CD14-positive monocyte (primary cell): ENCODE measurements at regions of chr6 and their contacts with region 1.

Region 1: GRCh38 chr6:41591859-41592502 is 45.8 kb downstream of the FOXP4 start:
- DNase-seq: peak; percentile 34 to 56 (median 55)
- H3K4me3 ChIP-seq: no peak overlapping the region
- H3K4me3 Mint-ChIP-seq: no peak overlapping the region
- H3K27ac ChIP-seq: no peak overlapping the region
- H3K27ac Mint-ChIP-seq: peak overlapping the region in 1 of 7 donors; percentile 40
- H3K4me1 ChIP-seq: no peaks in the 10 kb centered on the region
- H3K4me1 Mint-ChIP-seq: no peaks in the 10 kb centered on the region
- H3K27me3 ChIP-seq: no peaks in the 10 kb centered on the region
- H3K27me3 Mint-ChIP-seq: peaks cover 0 to 2% (median 0%) of the 10 kb centered on the region in 3 donors
- CTCF ChIP-seq: peak; percentile 89

Region 2: GRCh38 chr6:41367700-41368099 is 224.3 kb before region 1 on chr6:
- intact Hi-C with region 1: loop called (anchors 2 to 5 kb)
- DNase-seq: no peak
- H3K4me3 ChIP-seq: no peak overlapping the region
- H3K4me3 Mint-ChIP-seq: peak overlapping the region in 1 of 2 donors; percentile 15
- H3K27ac ChIP-seq: no peak overlapping the region
- H3K27ac Mint-ChIP-seq: peak overlapping the region in 1 of 7 donors; percentile 46
- H3K4me1 ChIP-seq: peaks cover 13 to 19% of the 10 kb centered on the region in 2 donors
- H3K4me1 Mint-ChIP-seq: peaks cover 20% of the 10 kb centered on the region
- H3K27me3 ChIP-seq: peaks cover 42 to 73% of the 10 kb centered on the region in 2 donors
- H3K27me3 Mint-ChIP-seq: peaks cover 53 to 76% (median 69%) of the 10 kb centered on the region in 3 donors
- CTCF ChIP-seq: no peak

Region 3: GRCh38 chr6:41424370-41425058 is 167.5 kb before region 1 on chr6:
- intact Hi-C with region 1: loop called (anchors 1 kb)
- DNase-seq: peak; percentile 40 to 55 (median 50)
- H3K4me3 ChIP-seq: no peak overlapping the region
- H3K4me3 Mint-ChIP-seq: no peak overlapping the region
- H3K27ac ChIP-seq: no peak overlapping the region
- H3K27ac Mint-ChIP-seq: no peak overlapping the region
- H3K4me1 ChIP-seq: peaks cover 10 to 21% of the 10 kb centered on the region in 2 donors
- H3K4me1 Mint-ChIP-seq: peaks cover 7% of the 10 kb centered on the region
- H3K27me3 ChIP-seq: peaks cover 42 to 48% of the 10 kb centered on the region in 2 donors
- H3K27me3 Mint-ChIP-seq: peaks cover 26 to 31% (median 28%) of the 10 kb centered on the region in 3 donors
- CTCF ChIP-seq: peak; percentile 85

Region 4: DNA sequence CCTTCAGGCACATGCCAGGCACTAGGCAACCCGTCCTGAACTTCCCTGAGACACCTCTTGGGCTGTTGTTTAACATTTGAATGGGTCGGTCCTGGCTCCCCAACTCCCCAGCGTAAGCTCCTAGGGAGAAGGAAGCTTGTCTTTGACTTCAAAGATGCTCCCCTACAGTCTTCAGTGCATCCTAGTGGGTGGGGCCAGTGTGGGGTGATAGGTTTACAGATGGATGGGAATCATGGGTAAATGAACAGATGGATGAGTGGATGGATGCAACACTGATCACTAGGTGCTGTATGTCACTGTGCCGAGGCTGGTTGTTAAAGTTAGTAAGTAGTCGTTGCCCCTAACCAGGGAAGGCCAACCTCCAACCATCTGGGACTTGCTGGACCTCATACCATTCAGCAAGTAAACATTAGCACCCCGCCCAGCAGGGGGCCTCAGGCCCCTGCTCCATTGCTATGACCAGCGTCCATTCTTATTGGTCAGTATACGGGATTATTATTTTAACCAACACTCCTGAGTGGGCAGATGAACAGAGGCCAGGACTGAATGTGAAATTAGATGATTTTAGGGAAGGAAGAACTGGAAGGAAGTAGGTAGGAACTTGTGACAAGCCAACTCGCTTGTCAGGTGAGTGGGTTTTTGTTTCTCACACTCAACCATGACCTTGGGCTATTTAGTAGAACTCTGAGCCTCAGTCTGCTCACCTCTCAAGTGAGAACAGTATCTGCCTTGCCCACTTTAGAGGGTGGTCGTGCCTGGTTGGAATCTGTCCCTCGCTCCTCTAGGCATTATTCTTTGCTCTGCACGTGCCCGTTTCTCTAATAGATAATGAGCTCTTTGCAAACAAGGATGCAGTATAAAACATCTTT is 128.7 kb before region 1 on chr6:
- intact Hi-C with region 1: loop called (anchors 1 to 2 kb)
- DNase-seq: peak; percentile 21 to 51 (median 46)
- H3K4me3 ChIP-seq: no peak overlapping the region
- H3K4me3 Mint-ChIP-seq: no peak overlapping the region
- H3K27ac ChIP-seq: no peak overlapping the region
- H3K27ac Mint-ChIP-seq: no peak overlapping the region
- H3K4me1 ChIP-seq: peaks cover 3 to 8% of the 10 kb centered on the region in 2 donors
- H3K4me1 Mint-ChIP-seq: peaks cover 8% of the 10 kb centered on the region
- H3K27me3 ChIP-seq: peaks cover 0 to 15% of the 10 kb centered on the region in 2 donors
- H3K27me3 Mint-ChIP-seq: peaks cover 14 to 26% (median 25%) of the 10 kb centered on the region in 3 donors
- CTCF ChIP-seq: peak; percentile 63